Adrenal gland (tissue), 19 donors: ENCODE measurements at regions of chr17 and their contacts with region 1.

Region 1: DNA sequence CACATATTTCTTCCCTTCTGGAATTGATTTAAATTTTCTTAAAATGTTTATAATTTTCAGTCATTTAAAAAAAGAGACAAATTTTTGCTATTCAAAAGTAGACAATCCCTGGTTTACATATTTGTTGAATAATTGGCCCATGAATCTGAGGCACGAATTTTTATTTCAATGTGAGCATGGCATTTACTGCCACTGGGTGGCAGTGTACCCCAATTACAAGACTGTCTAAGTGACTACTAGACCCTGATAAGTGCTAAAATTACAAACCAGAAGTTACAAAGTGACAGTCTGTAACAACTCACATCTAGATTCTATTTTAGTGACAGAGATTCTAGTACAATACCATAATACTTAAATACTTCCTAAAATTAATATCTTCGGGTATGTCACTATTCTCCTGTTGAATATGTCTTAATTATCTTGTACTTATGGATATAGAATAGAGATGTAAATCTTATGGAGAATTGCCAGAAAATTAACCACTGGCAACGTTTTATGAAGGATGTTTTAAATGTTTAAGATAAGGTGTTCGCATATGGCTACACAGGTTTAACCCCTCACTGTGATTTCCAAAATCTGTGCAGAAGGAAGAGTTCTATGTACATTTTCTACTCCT is 235.8 kb downstream of the MAP2K4 start:
- DNase-seq: peak; percentile 22 to 61 (median 29)
- H3K4me3 ChIP-seq: no peak overlapping the region
- H3K27ac ChIP-seq: no peak overlapping the region
- H3K4me1 ChIP-seq: no peaks in the 10 kb centered on the region
- H3K27me3 ChIP-seq: no peaks in the 10 kb centered on the region
- CTCF ChIP-seq: peak; percentile 62 to 78 (median 65)
- POLR2A ChIP-seq: no peak

Region 2: DNA sequence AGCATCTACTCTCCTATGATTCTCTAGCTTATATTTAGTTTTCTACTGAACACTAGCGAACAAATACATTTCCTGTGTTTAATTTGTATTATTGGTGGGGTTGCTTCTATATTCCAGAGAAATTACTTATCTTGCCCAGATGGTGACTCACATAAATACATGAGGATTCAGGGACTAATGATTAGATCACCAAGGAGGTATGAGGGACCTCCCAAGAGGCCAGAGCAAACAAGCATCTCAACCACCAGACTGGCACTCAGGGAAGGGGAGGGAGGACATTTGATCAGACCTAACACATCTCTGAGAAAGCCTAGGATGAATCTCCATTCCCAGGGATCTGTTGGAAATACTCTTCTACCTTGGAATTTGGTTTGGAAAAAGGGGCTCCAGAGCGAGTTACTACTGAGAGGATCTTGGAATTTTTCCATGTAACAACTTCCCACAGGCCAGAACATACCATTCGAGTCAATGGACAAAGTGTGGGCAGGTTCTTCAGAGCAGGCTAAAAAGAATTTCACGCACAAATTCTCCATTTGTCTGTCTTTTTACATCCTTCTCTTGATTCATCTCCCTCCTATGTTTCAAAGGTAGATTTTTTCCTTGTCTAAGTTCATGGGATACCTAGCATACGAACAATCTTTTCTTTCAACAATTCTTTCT is 146.6 kb after region 1 on chr17:
- intact Hi-C with region 1: no loop called
- DNase-seq: no peak
- H3K4me3 ChIP-seq: no peak overlapping the region
- H3K27ac ChIP-seq: no peak overlapping the region
- H3K4me1 ChIP-seq: no peaks in the 10 kb centered on the region
- H3K27me3 ChIP-seq: no peaks in the 10 kb centered on the region
- CTCF ChIP-seq: no peak
- POLR2A ChIP-seq: no peak

Region 3: GRCh38 chr17:12667299-12667958 is 410.9 kb after region 1 on chr17:
- intact Hi-C with region 1: loop called in 1 of 2 experiments (anchors 10 kb)
- DNase-seq: no peak
- H3K4me3 ChIP-seq: no peak overlapping the region
- H3K27ac ChIP-seq: no peak overlapping the region
- H3K4me1 ChIP-seq: no peaks in the 10 kb centered on the region
- H3K27me3 ChIP-seq: peaks cover 5% of the 10 kb centered on the region
- CTCF ChIP-seq: peak in 2 of 6 experiments; percentile 27 to 38
- POLR2A ChIP-seq: no peak